IMR-90 (cell line): ENCODE measurements at regions of chr19 and their contacts with region 1.

Region 1: DNA sequence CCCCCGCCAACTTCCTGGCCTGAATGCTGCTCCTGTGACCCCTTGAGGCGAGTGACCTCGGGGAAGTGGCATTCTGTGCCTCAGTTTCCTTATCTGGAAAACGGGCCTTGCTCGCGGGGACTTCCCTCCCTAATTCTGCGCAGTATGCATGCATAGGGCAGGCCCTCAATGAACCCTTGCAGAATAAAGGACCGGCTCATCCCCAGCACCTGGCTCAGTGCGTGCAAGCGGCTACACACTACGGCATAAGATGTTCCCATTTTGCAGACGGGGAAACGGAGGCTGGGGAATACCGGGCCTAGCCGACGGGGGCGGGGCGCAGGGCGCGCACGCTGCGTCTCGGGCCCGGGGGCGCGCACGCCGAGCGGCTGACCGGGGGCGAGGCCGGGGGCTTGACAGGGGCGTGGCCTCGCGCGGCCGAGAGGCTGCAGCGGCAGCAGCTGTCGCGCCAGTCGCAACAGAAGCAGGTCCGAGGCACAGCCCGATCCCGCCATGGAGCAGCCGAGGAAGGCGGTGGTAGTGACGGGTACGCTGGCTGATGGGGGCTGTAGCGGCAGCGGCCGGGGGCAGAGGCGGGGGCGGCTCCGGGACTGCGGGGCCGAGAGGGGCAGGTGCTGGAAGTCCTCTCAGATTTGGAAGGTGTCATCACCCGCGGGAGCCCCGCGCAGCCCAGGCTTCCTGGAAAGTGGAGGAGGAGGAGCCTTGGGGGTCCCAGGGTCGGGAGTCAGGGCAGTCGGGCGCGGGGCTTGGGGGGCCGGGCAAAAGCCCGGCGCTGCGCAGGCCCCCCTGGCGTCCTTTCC is at the start of gene PGPEP1:
- DNase-seq: peak; percentile 41
- ATAC-seq: peak; percentile 83
- H3K4me3 ChIP-seq: peak within 1 kb of the TSS; percentile 78
- H3K27ac ChIP-seq: peak within 1 kb of the TSS; percentile 11; the same call in 1 of the 2 replicates
- H3K4me1 ChIP-seq: peaks cover 12% of the 10 kb centered on the region
- H3K27me3 ChIP-seq: no peaks in the 10 kb centered on the region
- CTCF ChIP-seq: no peak
- POLR2A ChIP-seq: no peak
- RAD21 ChIP-seq: no peak
- total RNA-seq, gene PGPEP1: 11.1 and 14.3 TPM in 2 replicates

Region 2: GRCh38 chr19:18328340-18329034 is 11.9 kb before region 1 on chr19:
- CTCF ChIA-PET with region 1: interaction called, 11 read pairs
- POLR2A ChIA-PET with region 1: no interaction called
- dilution Hi-C with region 1: no loop called
- in situ Hi-C with region 1: no loop called
- intact Hi-C with region 1: no loop called
- DNase-seq: peak; percentile 97
- ATAC-seq: peak; percentile 100
- H3K4me3 ChIP-seq: peak overlapping the region; percentile 35
- H3K27ac ChIP-seq: peak overlapping the region; percentile 85
- H3K4me1 ChIP-seq: peaks cover 3% of the 10 kb centered on the region
- H3K27me3 ChIP-seq: no peaks in the 10 kb centered on the region; the same call in 1 of the 2 replicates
- CTCF ChIP-seq: peak; percentile 99
- POLR2A ChIP-seq: no peak
- RAD21 ChIP-seq: peak; percentile 87

Region 3: GRCh38 chr19:18529782-18530181 is 189.4 kb after region 1 on chr19:
- CTCF ChIA-PET with region 1: no interaction called
- POLR2A ChIA-PET with region 1: no interaction called
- dilution Hi-C with region 1: no loop called
- in situ Hi-C with region 1: no loop called
- intact Hi-C with region 1: no loop called
- DNase-seq: no peak
- ATAC-seq: peak; percentile 72
- H3K4me3 ChIP-seq: no peak overlapping the region
- H3K27ac ChIP-seq: no peak overlapping the region
- H3K4me1 ChIP-seq: no peaks in the 10 kb centered on the region
- H3K27me3 ChIP-seq: no peaks in the 10 kb centered on the region
- CTCF ChIP-seq: no peak
- POLR2A ChIP-seq: no peak
- RAD21 ChIP-seq: no peak